ENCODE measurements at regions of chr20 and their contacts with region 1.

Region 1: DNA sequence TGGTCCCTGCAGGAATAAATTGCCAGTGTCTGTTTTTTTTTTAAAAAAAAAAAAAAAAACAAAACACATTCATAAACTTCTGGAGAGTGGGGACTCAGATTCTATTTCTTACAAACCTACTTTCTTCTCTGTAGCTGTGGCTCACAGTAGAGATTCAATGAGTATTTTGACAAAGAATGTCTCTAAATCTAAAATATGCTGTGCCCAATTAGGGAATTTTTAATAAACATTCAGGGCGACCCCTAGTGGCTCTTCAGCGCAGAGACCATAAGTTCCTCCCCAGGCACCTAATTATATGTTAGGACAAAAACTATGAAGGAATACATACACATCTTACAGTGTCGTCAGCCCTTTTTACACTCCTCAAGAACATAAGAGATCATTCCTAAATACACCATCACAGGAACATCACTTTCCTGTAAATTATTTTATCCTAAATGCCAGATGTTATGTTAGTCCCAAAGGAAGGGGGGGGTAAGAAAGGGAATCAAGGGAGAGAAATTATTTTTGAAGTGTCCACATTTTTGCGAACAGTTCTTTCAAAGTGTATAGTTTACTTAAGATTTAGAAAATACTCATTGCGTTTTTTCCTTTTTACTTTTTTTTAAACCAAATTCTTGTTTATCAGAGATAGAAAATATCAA is 21.8 kb upstream of the NAA20 start:
- DNase-seq: no peak
- ATAC-seq: peak; percentile 35

Region 2: DNA sequence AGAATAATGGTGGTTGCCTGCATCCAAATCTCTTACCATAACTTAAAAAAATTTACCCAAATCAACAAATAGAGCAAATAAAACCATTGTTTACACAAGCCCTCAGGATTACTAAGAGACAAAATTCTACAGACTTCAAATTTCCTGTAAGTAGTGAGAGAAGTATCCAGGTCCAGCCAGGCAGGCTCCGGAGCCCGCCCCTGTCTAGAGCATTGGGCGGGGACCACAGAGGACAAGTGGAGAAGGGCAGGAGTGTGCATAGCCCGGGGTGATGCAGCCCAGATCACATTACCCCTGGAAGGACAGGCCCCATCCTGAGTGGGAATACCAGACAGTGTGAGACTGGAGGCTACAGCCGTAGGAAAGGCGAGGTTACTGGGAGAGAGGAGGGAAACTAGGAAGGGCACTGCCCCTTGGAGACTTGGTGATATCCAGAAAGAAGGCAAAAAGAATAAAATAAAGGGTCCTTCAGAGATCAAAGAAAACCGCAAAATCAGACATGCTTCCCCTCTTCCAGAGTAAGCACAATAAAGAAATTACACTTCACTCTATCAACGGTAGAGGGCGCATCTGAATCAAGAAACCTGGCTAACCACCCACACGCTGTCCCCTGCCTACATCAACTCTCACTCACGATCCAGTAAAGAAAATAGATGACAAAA is 210.7 kb before region 1 on chr20:
- intact Hi-C with region 1: loop called (anchors 5 kb)
- DNase-seq: peak; percentile 67
- ATAC-seq: peak; percentile 75

Region 3: DNA sequence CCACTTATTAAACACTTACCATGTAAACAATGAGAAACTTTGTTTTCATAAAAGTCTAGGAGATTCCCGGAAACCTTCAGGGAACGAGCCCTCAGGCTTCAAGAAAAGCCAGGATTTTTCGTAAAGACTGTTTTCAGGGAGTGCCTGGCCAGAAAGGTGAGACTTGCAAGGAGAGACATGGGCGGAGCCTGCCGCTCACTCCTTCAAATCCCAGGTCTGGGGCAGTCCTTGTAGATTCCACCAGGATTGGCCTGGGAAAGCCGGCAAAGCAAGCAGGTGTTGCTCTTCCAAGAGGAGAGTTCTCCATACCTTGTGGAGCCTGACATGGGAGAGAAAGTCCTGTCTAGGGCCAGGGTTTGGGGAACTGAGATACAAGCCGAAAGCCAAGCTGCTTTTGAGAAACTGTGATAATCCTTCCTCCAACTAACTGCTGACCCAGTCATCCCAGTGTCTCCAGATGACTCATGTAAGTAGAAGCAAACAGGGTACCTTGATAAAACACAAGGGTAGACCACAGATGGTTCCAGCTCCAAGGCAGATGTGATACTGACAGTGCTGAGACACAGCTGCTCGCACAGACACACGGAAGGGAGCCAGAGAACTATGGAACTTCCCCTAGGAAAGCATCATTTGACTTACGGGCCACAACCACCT is 47.6 kb before region 1 on chr20:
- intact Hi-C with region 1: loop called (anchors 10 kb)
- DNase-seq: no peak
- ATAC-seq: peak; percentile 6